ENCODE measurements at regions of chr5 and their contacts with region 1.

Region 1: GRCh38 chr5:116137544-116138378 is 52.9 kb downstream of the COMMD10 start:
- DNase-seq: peak; percentile 62
- ATAC-seq: peak; percentile 62
- H3K4me3 ChIP-seq: no peak overlapping the region
- H3K27ac ChIP-seq: no peak overlapping the region
- H3K4me1 ChIP-seq: no peaks in the 10 kb centered on the region
- H3K27me3 ChIP-seq: no peaks in the 10 kb centered on the region
- CTCF ChIP-seq: peak; percentile 79
- POLR2A ChIP-seq: no peak
- RAD21 ChIP-seq: peak; percentile 87

Region 2: GRCh38 chr5:116361171-116361967 is 223.6 kb after region 1 on chr5:
- CTCF ChIA-PET with region 1: no interaction called
- POLR2A ChIA-PET with region 1: no interaction called
- dilution Hi-C with region 1: no loop called
- in situ Hi-C with region 1: no loop called
- intact Hi-C with region 1: loop called (anchors 5 kb)
- DNase-seq: no peak
- ATAC-seq: peak; percentile 75
- H3K4me3 ChIP-seq: peak overlapping the region; percentile 25; the same call in 1 of the 2 replicates
- H3K27ac ChIP-seq: no peak overlapping the region
- H3K4me1 ChIP-seq: no peaks in the 10 kb centered on the region
- H3K27me3 ChIP-seq: peaks cover 3% of the 10 kb centered on the region; the same call in 1 of the 2 replicates
- CTCF ChIP-seq: no peak
- POLR2A ChIP-seq: no peak
- RAD21 ChIP-seq: no peak

Region 3: GRCh38 chr5:116454417-116454927 is 316.7 kb after region 1 on chr5:
- CTCF ChIA-PET with region 1: interaction called, 4 read pairs
- POLR2A ChIA-PET with region 1: no interaction called
- dilution Hi-C with region 1: no loop called
- in situ Hi-C with region 1: no loop called
- intact Hi-C with region 1: loop called (anchors 2 kb)
- DNase-seq: peak; percentile 92
- ATAC-seq: peak; percentile 95
- H3K4me3 ChIP-seq: no peak overlapping the region
- H3K27ac ChIP-seq: no peak overlapping the region
- H3K4me1 ChIP-seq: 0 out of 2 replicates have a peak, but pooled peaks cover 2% of the 10 kb centered on the region
- H3K27me3 ChIP-seq: peaks cover 14% of the 10 kb centered on the region
- CTCF ChIP-seq: no peak
- POLR2A ChIP-seq: no peak
- RAD21 ChIP-seq: no peak

Region 4: DNA sequence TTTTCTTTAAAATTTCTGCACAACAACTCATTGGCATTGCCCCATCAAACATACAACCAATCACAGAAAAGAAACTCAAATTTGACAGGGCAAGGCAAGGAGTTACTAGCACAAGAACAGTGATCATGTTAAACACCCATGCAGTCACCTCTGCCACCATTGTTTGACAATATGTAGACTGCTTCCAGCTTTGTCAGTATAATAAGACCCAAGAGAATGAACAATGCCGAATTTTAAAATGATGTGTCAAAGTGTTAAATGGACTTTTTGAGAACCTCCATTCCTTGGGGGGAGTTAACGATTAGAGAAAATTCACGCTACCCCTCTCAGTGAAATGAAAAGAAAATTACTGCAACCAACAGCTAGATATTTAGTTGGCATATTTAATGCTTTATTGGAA is 327.6 kb after region 1 on chr5:
- CTCF ChIA-PET with region 1: no interaction called
- POLR2A ChIA-PET with region 1: interaction called, 11 read pairs
- dilution Hi-C with region 1: no loop called
- in situ Hi-C with region 1: no loop called
- intact Hi-C with region 1: no loop called
- DNase-seq: no peak
- ATAC-seq: no peak
- H3K4me3 ChIP-seq: no peak overlapping the region
- H3K27ac ChIP-seq: no peak overlapping the region
- H3K4me1 ChIP-seq: no peaks in the 10 kb centered on the region
- H3K27me3 ChIP-seq: no peaks in the 10 kb centered on the region
- CTCF ChIP-seq: no peak
- POLR2A ChIP-seq: no peak
- RAD21 ChIP-seq: no peak

Region 5: DNA sequence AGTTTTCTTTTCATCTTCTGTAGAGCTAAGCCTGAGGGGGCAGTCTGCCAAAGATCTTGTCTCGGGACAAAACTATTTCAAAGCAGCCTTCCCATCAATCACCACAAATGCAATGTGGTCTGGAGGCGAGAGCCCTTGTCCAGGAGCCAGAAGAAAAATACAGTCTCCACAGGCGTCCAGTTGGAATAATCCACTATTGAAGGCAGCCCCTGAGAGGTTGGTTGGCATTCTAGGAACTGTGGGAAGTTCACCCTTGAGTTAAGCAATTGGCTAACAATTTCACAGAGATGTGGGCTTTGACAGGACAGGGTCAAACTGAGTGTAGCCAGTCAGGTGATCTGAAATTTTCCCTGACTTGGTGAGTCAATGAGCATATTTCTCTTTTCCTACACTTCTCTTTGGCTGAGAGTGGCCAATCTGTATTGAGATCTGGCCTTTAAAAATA is 364.9 kb after region 1 on chr5:
- CTCF ChIA-PET with region 1: no interaction called
- POLR2A ChIA-PET with region 1: no interaction called
- dilution Hi-C with region 1: no loop called
- in situ Hi-C with region 1: no loop called
- intact Hi-C with region 1: no loop called
- DNase-seq: peak; percentile 17
- ATAC-seq: no peak; the same call in 1 of the 2 replicates
- H3K4me3 ChIP-seq: no peak overlapping the region
- H3K27ac ChIP-seq: no peak overlapping the region
- H3K4me1 ChIP-seq: no peaks in the 10 kb centered on the region; the same call in 1 of the 2 replicates
- H3K27me3 ChIP-seq: no peaks in the 10 kb centered on the region
- CTCF ChIP-seq: no peak
- POLR2A ChIP-seq: no peak
- RAD21 ChIP-seq: no peak

Region 6: GRCh38 chr5:116557669-116558271 is 420.0 kb after region 1 on chr5:
- CTCF ChIA-PET with region 1: interaction called, 3 read pairs
- POLR2A ChIA-PET with region 1: no interaction called
- dilution Hi-C with region 1: no loop called
- in situ Hi-C with region 1: no loop called
- intact Hi-C with region 1: loop called (anchors 2 kb)
- DNase-seq: peak; percentile 8
- ATAC-seq: peak; percentile 54; the same call in 1 of the 2 replicates
- H3K4me3 ChIP-seq: no peak overlapping the region
- H3K27ac ChIP-seq: no peak overlapping the region
- H3K4me1 ChIP-seq: no peaks in the 10 kb centered on the region
- H3K27me3 ChIP-seq: no peaks in the 10 kb centered on the region
- CTCF ChIP-seq: peak; percentile 45
- POLR2A ChIP-seq: no peak
- RAD21 ChIP-seq: peak; percentile 30; the same call in 1 of the 2 replicates

Region 7: DNA sequence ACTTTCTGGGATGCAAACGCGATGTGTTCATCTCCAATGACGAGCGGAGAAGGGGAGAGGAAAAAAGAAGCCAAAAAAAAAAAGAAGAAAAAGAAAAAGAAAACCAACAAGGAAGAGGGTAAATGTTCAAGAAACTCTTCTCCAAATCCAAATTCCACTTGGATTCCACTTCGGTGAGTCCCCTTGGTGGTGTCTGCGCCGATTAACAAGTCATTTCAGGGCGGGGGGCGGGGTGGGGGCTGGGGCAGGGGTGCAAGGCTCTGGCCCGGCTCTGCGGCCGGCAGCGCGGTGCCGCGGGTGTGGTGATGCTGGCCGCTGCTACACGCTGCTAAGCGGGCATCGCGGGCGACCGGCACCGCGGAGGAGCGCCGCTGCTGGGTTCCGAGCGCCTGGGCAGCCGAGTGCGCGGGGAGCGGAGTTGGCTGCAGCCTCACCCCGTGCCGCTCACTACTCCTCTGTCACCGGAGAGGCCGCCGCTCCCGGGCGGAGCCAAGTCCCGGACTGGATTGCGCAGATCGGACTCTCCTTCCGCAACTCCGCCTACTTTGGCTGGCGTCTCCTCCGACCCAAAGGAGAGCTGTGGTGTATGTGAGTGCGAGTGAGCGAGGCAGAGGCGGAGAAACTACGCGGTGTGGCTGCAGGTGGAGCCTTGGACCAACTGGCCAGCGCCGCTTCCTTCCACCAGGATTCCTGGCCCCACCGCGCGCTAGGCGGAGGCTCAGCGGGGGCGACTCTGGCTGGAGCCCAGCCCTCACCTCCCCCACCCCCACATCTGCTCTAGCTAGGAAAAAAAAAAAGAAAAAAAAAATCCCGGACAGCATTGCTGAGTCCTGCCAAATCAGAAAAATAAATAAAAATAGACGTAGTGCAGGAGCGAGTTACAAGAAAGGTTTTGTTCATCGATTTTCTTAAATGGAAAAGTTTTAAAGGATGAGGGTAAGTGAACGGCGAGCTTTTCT is 436.9 kb after region 1 on chr5 and contains the start of gene SEMA6A:
- CTCF ChIA-PET with region 1: no interaction called
- POLR2A ChIA-PET with region 1: no interaction called
- dilution Hi-C with region 1: no loop called
- in situ Hi-C with region 1: no loop called
- intact Hi-C with region 1: loop called (anchors 5 kb)
- DNase-seq: peak; percentile 75
- ATAC-seq: peak; percentile 90
- H3K4me3 ChIP-seq: peak within 1 kb of the TSS; percentile 69
- H3K27ac ChIP-seq: no peak within 1 kb of the TSS
- H3K4me1 ChIP-seq: no peaks in the 10 kb centered on the region; the same call in 1 of the 2 replicates
- H3K27me3 ChIP-seq: peaks cover 47% of the 10 kb centered on the region
- CTCF ChIP-seq: no peak
- POLR2A ChIP-seq: no peak
- RAD21 ChIP-seq: no peak
- total RNA-seq, gene SEMA6A: 0.28 and 0.36 TPM in 2 replicates